CD4-positive, alpha-beta memory T cell (primary cell): ENCODE measurements at regions of chr9 and their contacts with region 1.

Region 1: DNA sequence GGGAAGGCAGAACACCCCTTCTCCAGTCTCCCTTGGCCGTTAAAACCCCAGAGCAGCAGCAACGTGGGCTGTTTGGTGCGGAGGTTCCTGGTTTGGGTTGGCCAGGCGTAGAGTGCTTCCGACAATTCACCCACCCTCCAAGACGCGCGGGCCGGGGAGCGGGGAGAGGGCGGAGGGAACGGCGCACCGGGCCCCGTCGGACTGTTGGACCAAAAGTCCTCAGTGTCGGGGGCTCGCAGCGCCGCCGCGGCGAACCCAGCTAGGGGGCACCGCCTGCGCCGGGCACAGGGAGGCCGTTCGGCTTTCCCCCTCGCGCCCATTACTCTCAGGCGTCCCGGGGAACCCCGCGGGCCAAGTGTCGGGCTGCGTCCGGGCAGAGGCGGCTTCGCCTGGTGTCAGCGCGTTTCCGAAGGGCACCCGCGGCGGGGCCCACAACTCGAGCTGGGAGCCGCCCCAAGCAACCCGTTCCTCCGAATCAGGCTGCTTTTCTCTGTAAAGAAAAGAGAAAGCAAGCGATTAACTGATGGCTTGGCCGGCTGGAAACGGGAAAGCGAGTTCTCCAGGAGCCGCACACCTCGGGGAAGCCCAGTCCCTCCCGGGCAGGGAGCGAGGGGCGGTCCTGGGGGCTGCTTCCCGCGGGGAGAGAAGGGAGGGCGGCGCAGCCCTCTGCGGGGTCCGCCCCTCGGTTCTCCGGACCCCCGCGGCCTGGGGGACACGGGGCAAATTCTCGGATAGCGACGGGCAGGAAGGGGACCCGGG is 145.5 kb downstream of the ERCC6L2 start:
- DNase-seq: peak in 4 of 5 donors; percentile 43 to 55 (median 48)
- H3K4me3 ChIP-seq: peak overlapping the region in 1 of 2 donors; percentile 52
- H3K4me3 Mint-ChIP-seq: peak overlapping the region; percentile 81 to 93 (median 86)
- H3K27ac ChIP-seq: peak overlapping the region; percentile 58
- H3K27ac Mint-ChIP-seq: peak overlapping the region; percentile 72 to 95 (median 86)
- H3K4me1 ChIP-seq: peaks cover 56% of the 10 kb centered on the region
- H3K4me1 Mint-ChIP-seq: peaks cover 44 to 85% (median 60%) of the 10 kb centered on the region in 4 donors
- H3K27me3 ChIP-seq: no peaks in the 10 kb centered on the region
- H3K27me3 Mint-ChIP-seq: peaks cover 0 to 6% of the 10 kb centered on the region in 2 donors

Region 2: DNA sequence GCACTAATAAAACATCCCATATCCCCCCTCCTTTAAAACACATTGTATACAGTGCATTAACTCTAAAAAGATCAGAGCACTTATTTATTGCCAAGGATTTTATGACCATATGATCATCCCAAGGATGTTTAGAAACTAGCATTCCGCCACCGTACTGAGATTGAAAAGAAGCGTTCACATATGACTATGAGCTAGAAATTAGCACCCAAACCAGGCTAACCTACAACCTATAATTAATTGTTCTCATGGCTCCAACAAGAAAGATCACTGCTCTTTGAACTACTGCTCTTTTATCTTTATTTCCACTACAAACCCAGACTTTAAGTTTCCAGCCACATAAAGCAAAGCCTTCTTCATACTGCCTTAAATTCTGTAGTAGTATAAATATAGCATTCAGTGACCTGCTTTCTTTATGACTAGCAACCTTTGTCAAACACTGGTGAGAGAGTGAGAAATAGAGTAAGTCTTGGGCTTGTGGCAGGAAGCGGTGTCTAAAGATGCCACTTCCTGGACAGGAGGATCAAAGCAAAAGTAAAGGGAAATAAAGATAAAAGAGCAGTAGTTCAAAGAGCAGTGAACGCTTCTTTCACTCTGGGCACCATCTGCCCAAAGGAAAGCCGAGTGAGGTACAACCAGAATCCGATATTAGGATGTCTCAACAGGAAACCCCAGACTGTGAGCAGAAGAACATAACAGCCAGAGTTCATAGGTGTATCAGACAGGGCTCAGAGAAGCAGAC is 296.5 kb before region 1 on chr9:
- CTCF ChIA-PET with region 1: no interaction called
- POLR2A ChIA-PET with region 1: no interaction called
- intact Hi-C with region 1: loop called (anchors 5 kb)
- DNase-seq: peak; percentile 84 to 93 (median 89)
- H3K4me3 ChIP-seq: no peak overlapping the region
- H3K4me3 Mint-ChIP-seq: peak overlapping the region; percentile 8 to 73 (median 40)
- H3K27ac ChIP-seq: no peak overlapping the region
- H3K27ac Mint-ChIP-seq: peak overlapping the region; percentile 69 to 92 (median 88)
- H3K4me1 ChIP-seq: peaks cover 34% of the 10 kb centered on the region
- H3K4me1 Mint-ChIP-seq: peaks cover 29 to 49% (median 33%) of the 10 kb centered on the region in 4 donors
- H3K27me3 ChIP-seq: no peaks in the 10 kb centered on the region
- H3K27me3 Mint-ChIP-seq: peaks cover 0 to 2% of the 10 kb centered on the region in 2 donors

Region 3: DNA sequence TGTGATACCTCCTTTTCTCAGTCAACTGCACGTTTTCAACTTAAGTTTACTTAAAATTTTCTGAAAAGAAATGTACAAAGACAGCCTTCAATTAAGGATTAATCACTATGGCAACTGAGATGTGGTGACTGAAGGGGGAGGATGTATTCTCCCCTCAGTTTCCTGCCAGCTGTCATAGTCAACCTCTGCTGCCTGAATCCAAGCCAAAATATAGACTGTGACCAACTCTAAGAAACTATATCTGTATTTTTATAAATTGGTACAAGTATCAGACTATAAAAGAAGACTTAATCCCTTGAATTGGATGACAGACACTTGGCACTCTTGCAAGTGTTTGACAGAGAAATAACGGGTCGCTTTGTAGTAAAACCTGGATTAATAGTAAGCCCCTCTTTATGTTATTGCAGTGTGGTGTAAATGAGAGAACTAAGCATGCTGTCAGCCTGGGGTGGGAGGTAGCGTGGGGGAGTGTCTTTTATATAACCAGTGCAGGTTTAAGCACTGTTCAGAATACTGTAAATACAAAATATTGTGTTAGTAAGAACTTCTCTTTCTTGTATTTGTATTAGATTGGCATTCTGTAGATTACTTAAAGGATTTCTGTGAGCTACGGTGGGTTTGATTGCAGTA is 39.1 kb before region 1 on chr9:
- CTCF ChIA-PET with region 1: no interaction called
- POLR2A ChIA-PET with region 1: no interaction called
- intact Hi-C with region 1: loop called (anchors 5 kb)
- DNase-seq: peak in 4 of 5 donors; percentile 35 to 59 (median 51)
- H3K4me3 ChIP-seq: no peak overlapping the region
- H3K4me3 Mint-ChIP-seq: peak overlapping the region in 5 of 8 donors; percentile 2 to 39 (median 36)
- H3K27ac ChIP-seq: no peak overlapping the region
- H3K27ac Mint-ChIP-seq: peak overlapping the region in 6 of 7 donors; percentile 13 to 87 (median 82)
- H3K4me1 ChIP-seq: peaks cover 11% of the 10 kb centered on the region
- H3K4me1 Mint-ChIP-seq: peaks cover 12 to 21% (median 18%) of the 10 kb centered on the region in 4 donors
- H3K27me3 ChIP-seq: no peaks in the 10 kb centered on the region
- H3K27me3 Mint-ChIP-seq: no peaks in the 10 kb centered on the region

Region 4: GRCh38 chr9:96009690-96010472 is 11.1 kb before region 1 on chr9:
- CTCF ChIA-PET with region 1: interaction called, 9 read pairs
- POLR2A ChIA-PET with region 1: interaction called, 12 read pairs
- intact Hi-C with region 1: no loop called
- DNase-seq: peak; percentile 48 to 82 (median 67)
- H3K4me3 ChIP-seq: no peak overlapping the region
- H3K4me3 Mint-ChIP-seq: peak overlapping the region in 6 of 8 donors; percentile 42 to 66 (median 54)
- H3K27ac ChIP-seq: peak overlapping the region; percentile 29
- H3K27ac Mint-ChIP-seq: peak overlapping the region in 6 of 7 donors; percentile 87 to 95 (median 94)
- H3K4me1 ChIP-seq: peaks cover 58% of the 10 kb centered on the region
- H3K4me1 Mint-ChIP-seq: peaks cover 17 to 56% (median 30%) of the 10 kb centered on the region in 4 donors
- H3K27me3 ChIP-seq: no peaks in the 10 kb centered on the region
- H3K27me3 Mint-ChIP-seq: no peaks in the 10 kb centered on the region

Region 5: DNA sequence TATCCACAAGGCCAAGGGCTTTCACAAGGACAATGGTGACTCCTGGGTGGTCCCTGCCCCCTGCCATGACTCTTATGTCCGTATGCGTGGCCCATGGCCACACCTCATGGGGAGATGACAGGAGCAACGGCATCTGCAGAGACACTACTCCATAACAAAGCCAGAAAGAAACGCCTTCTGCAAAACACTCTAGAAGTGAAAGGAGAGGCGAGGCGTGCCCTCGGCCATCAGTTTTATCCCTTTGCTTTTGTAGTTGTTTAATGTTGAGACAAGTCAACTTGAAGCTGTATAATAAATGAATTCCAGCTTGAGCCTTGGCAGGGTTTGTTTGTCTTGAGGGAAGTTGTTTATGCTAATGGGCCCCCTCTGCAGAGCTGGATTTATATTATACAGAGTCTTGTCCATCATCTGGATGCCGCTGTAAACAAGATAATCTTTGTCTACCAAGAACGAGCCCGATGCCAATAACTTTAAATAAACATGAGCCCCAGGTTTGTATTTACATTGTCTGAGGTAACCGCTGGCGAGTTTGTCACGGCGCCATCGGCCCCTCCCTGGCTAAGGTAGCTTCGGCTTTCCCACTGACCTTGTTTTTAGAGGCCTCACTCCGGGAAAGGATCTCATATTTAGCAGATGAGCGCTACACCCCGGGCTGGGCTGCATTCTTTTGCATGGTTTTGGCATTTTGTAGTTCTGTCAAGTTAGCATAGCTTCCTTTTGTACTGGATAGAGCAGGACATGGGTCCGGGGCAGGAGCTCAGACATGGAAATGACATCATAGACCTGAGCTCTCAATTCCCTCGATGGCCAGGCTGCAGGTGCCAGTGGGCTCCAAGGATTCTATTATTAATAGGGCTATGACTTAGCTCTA is 19.9 kb after region 1 on chr9:
- CTCF ChIA-PET with region 1: no interaction called
- POLR2A ChIA-PET with region 1: no interaction called
- intact Hi-C with region 1: no loop called
- DNase-seq: no peak
- H3K4me3 ChIP-seq: no peak overlapping the region
- H3K4me3 Mint-ChIP-seq: no peak overlapping the region
- H3K27ac ChIP-seq: no peak overlapping the region
- H3K27ac Mint-ChIP-seq: no peak overlapping the region
- H3K4me1 ChIP-seq: no peaks in the 10 kb centered on the region
- H3K4me1 Mint-ChIP-seq: peaks cover 0 to 3% (median 0%) of the 10 kb centered on the region in 4 donors
- H3K27me3 ChIP-seq: no peaks in the 10 kb centered on the region
- H3K27me3 Mint-ChIP-seq: peaks cover 0 to 3% of the 10 kb centered on the region in 2 donors

Region 6: DNA sequence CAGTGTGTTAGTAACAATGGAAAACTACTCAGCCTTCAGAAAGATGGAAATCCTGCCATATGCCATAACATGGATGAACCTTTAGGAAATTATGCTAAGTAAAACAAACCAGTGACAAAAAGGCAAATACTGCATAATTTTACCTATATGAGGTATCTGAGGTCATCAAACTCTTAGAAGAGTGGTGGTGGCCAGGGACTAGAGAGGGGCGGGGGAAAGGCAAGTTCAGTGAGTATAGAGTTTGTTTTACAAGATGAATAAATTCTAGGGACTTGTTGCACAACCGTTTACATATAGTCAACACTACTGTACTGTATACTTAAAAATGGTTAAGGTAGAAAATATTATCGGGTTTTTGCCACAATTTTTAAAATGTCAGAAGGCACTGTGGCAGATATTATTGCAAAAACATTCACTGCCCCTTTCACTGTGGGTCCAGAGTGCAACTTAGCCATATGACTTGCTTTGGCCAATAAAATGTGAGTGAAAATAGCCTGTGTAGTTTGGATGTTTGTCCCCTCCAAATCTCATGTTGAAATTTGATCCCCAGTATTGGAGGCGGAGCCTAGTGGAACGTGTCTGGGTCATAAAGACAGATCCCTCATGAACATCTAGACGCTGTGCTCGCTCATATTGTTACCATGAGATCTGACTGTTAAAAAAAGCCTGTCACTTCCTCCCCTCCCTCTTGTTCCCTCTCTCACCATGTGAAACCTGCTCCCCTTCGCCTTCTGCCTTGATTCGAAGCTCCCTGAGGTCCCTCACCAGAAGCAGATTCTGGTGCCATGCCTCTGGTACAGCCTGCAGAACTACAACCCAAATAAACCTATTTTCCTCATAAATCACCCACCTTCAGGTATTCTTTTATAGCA is 387.7 kb after region 1 on chr9:
- CTCF ChIA-PET with region 1: no interaction called
- POLR2A ChIA-PET with region 1: no interaction called
- intact Hi-C with region 1: no loop called
- DNase-seq: no peak
- H3K4me3 ChIP-seq: peak overlapping the region in 1 of 2 donors; percentile 11
- H3K4me3 Mint-ChIP-seq: peak overlapping the region in 3 of 8 donors; percentile 12 to 48 (median 22)
- H3K27ac ChIP-seq: no peak overlapping the region
- H3K27ac Mint-ChIP-seq: peak overlapping the region; percentile 69 to 92 (median 86)
- H3K4me1 ChIP-seq: peaks cover 24% of the 10 kb centered on the region
- H3K4me1 Mint-ChIP-seq: peaks cover 23 to 40% (median 28%) of the 10 kb centered on the region in 4 donors
- H3K27me3 ChIP-seq: no peaks in the 10 kb centered on the region
- H3K27me3 Mint-ChIP-seq: no peaks in the 10 kb centered on the region

Region 7: GRCh38 chr9:96619491-96620154 is 598.7 kb after region 1 on chr9 and contains the start of gene CDC14B:
- CTCF ChIA-PET with region 1: no interaction called
- POLR2A ChIA-PET with region 1: no interaction called
- intact Hi-C with region 1: loop called (anchors 10 kb)
- DNase-seq: peak; percentile 51 to 77 (median 62)
- H3K4me3 ChIP-seq: peak within 1 kb of the TSS in 1 of 2 donors; percentile 38
- H3K4me3 Mint-ChIP-seq: peak within 1 kb of the TSS; percentile 62 to 83 (median 80)
- H3K27ac ChIP-seq: no peak within 1 kb of the TSS
- H3K27ac Mint-ChIP-seq: peak within 1 kb of the TSS in 4 of 7 donors; percentile 37 to 63 (median 44)
- H3K4me1 ChIP-seq: peaks cover 9% of the 10 kb centered on the region
- H3K4me1 Mint-ChIP-seq: peaks cover 4 to 6% (median 6%) of the 10 kb centered on the region in 4 donors
- H3K27me3 ChIP-seq: peaks cover 8% of the 10 kb centered on the region
- H3K27me3 Mint-ChIP-seq: peaks cover 20 to 31% of the 10 kb centered on the region in 2 donors
- total RNA-seq, gene CDC14B: 15.8 to 17.1 TPM